ENCODE measurements at regions of chr11 and their contacts with region 1.

Region 1: GRCh38 chr11:129117595-129118350 is 74.4 kb downstream of the ARHGAP32 start:
- DNase-seq: peak; percentile 62
- ATAC-seq: no peak
- H3K4me3 Mint-ChIP-seq: no peak overlapping the region
- H3K27ac Mint-ChIP-seq: no peak overlapping the region
- H3K4me1 Mint-ChIP-seq: peaks cover 11% of the 10 kb centered on the region
- H3K27me3 Mint-ChIP-seq: no peaks in the 10 kb centered on the region

Region 2: GRCh38 chr11:129249351-129249750 is 131.6 kb after region 1 on chr11:
- CTCF ChIA-PET with region 1: interaction called, 4 read pairs
- POLR2A ChIA-PET with region 1: no interaction called
- intact Hi-C with region 1: loop called in 1 of 2 experiments (anchors 2 kb)
- DNase-seq: no peak
- ATAC-seq: no peak
- H3K4me3 Mint-ChIP-seq: no peak overlapping the region
- H3K27ac Mint-ChIP-seq: no peak overlapping the region
- H3K4me1 Mint-ChIP-seq: peaks cover 38% of the 10 kb centered on the region
- H3K27me3 Mint-ChIP-seq: no peaks in the 10 kb centered on the region

Region 3: DNA sequence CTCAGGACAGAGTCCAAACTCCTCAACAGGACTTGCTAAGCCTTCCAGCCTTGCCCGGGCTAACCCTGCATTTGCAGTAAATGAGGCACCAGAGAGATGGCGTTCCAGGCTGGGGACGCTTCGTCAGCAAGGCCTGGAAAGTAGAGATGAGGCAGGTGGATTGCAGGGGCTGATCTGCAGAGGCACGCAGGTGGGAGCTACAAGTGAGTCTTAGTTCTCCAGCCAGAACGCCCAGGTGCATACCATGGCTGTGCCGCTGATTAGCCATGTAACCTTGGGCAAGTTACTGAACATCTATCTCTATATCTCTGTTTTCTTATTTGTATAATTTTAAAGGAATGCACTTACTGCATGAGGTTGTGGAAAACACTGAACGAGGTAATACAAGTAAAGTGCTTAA is 205.2 kb after region 1 on chr11:
- CTCF ChIA-PET with region 1: interaction called, 10 read pairs
- POLR2A ChIA-PET with region 1: no interaction called
- intact Hi-C with region 1: no loop called
- DNase-seq: no peak
- ATAC-seq: no peak
- H3K4me3 Mint-ChIP-seq: no peak overlapping the region
- H3K27ac Mint-ChIP-seq: no peak overlapping the region
- H3K4me1 Mint-ChIP-seq: peaks cover under 1% of the 10 kb centered on the region
- H3K27me3 Mint-ChIP-seq: no peaks in the 10 kb centered on the region

Region 4: DNA sequence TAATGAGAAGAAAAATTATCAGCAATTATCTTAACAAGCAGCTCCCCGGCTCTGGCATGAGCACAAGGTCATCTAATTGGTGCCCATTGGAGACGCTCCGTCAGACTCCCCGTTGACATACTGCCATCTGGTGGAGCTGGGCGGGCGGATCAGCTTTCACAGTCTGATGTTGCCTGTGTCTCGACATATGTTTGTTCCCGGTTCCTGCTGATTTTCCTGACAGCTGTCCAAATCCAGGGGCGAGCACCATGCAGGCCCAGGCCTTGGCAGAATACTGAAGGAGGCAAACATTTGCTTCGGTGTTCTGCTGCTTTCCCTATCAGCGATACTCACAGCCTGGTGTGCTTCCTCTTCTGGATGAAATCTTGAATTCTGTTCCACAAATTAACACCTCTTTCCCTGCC is 214.1 kb after region 1 on chr11:
- CTCF ChIA-PET with region 1: interaction called, 50 read pairs
- POLR2A ChIA-PET with region 1: no interaction called
- intact Hi-C with region 1: loop called (anchors 1 kb)
- DNase-seq: peak; percentile 86
- ATAC-seq: peak; percentile 75
- H3K4me3 Mint-ChIP-seq: no peak overlapping the region
- H3K27ac Mint-ChIP-seq: no peak overlapping the region
- H3K4me1 Mint-ChIP-seq: peaks cover 5% of the 10 kb centered on the region
- H3K27me3 Mint-ChIP-seq: no peaks in the 10 kb centered on the region

Region 5: GRCh38 chr11:129364143-129364654 is 246.4 kb after region 1 on chr11:
- CTCF ChIA-PET with region 1: interaction called, 5 read pairs
- POLR2A ChIA-PET with region 1: no interaction called
- intact Hi-C with region 1: loop called in 1 of 2 experiments (anchors 1 kb)
- DNase-seq: peak; percentile 91
- ATAC-seq: peak; percentile 99
- H3K4me3 Mint-ChIP-seq: no peak overlapping the region
- H3K27ac Mint-ChIP-seq: no peak overlapping the region
- H3K4me1 Mint-ChIP-seq: no peaks in the 10 kb centered on the region
- H3K27me3 Mint-ChIP-seq: peaks cover 32% of the 10 kb centered on the region

Region 6: DNA sequence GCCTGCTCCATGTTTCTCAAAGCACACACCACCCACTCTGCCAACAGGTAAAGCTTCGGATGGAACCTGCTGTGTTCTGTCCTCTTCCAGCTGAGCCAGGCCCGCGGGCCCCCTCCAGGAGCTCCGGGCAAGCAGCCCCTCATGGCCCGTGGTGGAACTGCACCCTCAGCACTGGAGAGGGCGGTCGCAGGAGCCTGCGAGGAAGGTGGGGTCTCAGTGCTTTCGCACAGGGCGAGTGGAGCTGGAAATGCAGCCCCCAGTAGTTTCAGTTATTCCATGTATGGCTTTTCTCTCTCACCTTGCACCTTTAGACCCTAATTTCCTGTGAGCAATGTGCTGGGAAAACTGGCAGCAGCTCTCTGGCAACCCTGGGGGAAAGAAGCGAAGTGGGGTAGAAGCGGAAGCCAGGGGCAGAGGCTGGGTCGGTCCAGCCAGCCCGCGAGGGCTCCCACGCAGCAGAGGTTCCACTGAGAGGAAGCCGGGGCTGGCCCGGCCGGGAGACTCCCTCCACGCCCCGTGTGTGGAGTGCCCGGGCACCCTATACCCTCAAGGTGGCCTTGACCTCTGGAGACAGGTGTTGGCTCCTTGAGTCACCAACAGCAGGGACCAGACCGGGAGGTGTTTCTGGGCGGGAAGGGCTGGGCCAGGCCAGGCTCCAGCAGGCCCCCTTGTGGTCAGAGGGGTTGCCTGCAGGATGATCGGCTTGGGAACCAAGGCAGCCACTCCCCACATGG is 578.0 kb after region 1 on chr11:
- CTCF ChIA-PET with region 1: interaction called, 3 read pairs
- POLR2A ChIA-PET with region 1: no interaction called
- intact Hi-C with region 1: loop called in 1 of 2 experiments (anchors 5 kb)
- DNase-seq: peak; percentile 83
- ATAC-seq: peak; percentile 86
- H3K4me3 Mint-ChIP-seq: peak overlapping the region; percentile 53
- H3K27ac Mint-ChIP-seq: peak overlapping the region; percentile 63
- H3K4me1 Mint-ChIP-seq: peaks cover 5% of the 10 kb centered on the region
- H3K27me3 Mint-ChIP-seq: peaks cover 8% of the 10 kb centered on the region

Region 7: DNA sequence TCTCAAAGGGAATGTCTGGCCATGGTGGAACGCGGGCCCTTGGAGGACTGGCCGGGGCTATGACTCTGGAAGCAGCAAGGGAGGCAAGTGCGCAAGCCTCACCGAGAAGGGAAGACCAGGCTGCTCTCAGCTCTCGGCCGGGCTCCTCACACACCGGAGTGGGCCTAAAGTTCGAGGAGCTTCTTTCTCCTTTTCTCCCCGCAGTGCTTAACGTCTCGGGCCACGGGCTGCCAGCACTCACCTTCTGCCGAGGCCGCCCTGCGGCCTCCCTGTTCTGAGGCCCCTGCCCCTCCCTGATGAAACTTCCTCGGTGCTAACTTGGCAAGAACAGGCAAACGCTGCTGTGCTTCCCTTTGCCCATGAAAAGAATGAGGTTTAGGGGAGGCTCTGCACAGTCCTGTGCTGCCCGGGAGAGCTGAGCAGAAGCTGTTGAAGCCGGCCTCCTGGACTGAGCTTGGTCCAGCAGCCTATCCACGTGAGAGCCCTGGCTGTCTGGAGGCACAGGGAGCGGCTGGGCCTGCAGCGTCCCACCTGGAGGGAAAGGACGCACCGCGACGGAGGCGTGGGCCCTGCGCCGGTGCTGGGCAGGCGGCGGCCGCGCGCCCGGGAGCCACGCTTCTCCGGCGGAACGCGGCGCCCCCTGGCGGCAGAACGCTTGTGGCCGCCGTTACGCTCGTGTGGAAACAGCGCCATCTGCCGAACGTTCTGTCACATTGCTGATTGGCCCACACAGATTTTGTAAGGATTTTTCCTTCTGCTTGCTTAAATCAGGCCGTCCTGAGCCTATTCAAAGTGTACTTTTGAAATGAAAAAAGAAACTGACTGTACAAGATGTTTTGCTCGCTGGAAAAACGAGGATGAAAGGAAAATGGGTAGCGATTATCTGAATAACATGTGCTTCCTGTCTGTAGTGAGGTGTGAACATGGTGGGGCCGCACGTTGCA is 632.8 kb after region 1 on chr11:
- CTCF ChIA-PET with region 1: interaction called, 3 read pairs
- POLR2A ChIA-PET with region 1: no interaction called
- intact Hi-C with region 1: loop called (anchors 1 kb)
- DNase-seq: peak; percentile 88
- ATAC-seq: peak; percentile 93
- H3K4me3 Mint-ChIP-seq: no peak overlapping the region
- H3K27ac Mint-ChIP-seq: no peak overlapping the region
- H3K4me1 Mint-ChIP-seq: peaks cover 3% of the 10 kb centered on the region
- H3K27me3 Mint-ChIP-seq: peaks cover 12% of the 10 kb centered on the region

Measured in activated CD4-positive, alpha-beta T cell treated with anti-CD3 and anti-CD28 coated beads for 36 hours (primary cell).